Common myeloid progenitor, CD34-positive (primary cell): ENCODE measurements at regions of chr3 and their contacts with region 1.

Region 1: DNA sequence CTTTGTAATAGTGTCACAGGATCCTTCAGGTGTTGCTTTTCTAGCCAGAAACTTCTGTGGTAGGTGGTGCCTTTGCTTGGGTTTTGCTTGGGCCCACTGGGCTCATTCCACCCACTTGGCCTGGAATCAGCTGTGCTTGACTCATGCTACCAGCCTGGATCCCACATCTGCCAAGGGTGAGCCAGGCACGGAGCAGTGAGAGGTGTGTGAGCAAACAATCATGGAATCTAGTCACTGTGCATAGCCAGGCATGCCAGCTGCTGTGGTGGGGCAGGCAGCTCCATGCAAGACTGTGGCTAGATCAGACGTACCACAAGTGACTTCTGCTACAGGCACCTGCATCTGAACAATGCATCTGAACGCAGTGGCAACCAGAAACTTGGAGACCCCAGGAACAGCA is 275.9 kb downstream of the UBE2E2 start:
- DNase-seq: no peak
- H3K4me3 ChIP-seq: no peak overlapping the region
- H3K27ac ChIP-seq: no peak overlapping the region
- H3K4me1 ChIP-seq: peaks cover 0 to 5% (median 0%) of the 10 kb centered on the region in 4 experiments
- H3K27me3 ChIP-seq: no peaks in the 10 kb centered on the region

Region 2: GRCh38 chr3:22318325-22318724 is 1160.7 kb before region 1 on chr3:
- CTCF ChIA-PET with region 1: no interaction called
- POLR2A ChIA-PET with region 1: interaction called, 13 read pairs
- DNase-seq: no peak
- H3K4me3 ChIP-seq: no peak overlapping the region
- H3K27ac ChIP-seq: no peak overlapping the region
- H3K4me1 ChIP-seq: no peaks in the 10 kb centered on the region
- H3K27me3 ChIP-seq: no peaks in the 10 kb centered on the region

Region 3: DNA sequence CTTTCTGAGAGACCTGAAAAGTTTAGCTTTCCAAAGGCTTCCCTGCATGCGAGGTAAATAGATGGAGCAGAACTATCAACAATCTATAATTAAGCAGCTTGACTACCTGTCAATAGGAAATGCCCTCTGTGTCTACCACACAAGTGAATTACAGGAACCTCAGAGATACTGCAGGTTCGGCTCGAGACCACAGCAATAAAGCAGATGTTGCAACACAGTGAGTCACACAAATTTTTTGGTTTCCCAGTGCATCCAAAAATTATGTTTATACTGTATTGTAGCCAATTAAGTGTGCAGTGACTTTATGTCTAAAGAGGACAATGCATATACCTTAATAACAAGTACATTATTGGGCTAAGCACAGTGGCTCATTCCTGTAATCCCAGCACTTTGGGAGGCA is 23.9 kb before region 1 on chr3:
- CTCF ChIA-PET with region 1: no interaction called
- POLR2A ChIA-PET with region 1: no interaction called
- DNase-seq: peak in 2 of 3 donors; percentile 62 to 63
- H3K4me3 ChIP-seq: no peak overlapping the region
- H3K27ac ChIP-seq: no peak overlapping the region
- H3K4me1 ChIP-seq: peaks cover 0 to 4% (median 0%) of the 10 kb centered on the region in 4 experiments
- H3K27me3 ChIP-seq: no peaks in the 10 kb centered on the region

Region 4: GRCh38 chr3:23465569-23465968 is 13.5 kb before region 1 on chr3:
- CTCF ChIA-PET with region 1: no interaction called
- POLR2A ChIA-PET with region 1: no interaction called
- DNase-seq: no peak
- H3K4me3 ChIP-seq: no peak overlapping the region
- H3K27ac ChIP-seq: no peak overlapping the region
- H3K4me1 ChIP-seq: no peaks in the 10 kb centered on the region
- H3K27me3 ChIP-seq: no peaks in the 10 kb centered on the region